Psoas muscle (tissue), 8 donors: ENCODE measurements at regions of chr9 and their contacts with region 1.

Region 1: DNA sequence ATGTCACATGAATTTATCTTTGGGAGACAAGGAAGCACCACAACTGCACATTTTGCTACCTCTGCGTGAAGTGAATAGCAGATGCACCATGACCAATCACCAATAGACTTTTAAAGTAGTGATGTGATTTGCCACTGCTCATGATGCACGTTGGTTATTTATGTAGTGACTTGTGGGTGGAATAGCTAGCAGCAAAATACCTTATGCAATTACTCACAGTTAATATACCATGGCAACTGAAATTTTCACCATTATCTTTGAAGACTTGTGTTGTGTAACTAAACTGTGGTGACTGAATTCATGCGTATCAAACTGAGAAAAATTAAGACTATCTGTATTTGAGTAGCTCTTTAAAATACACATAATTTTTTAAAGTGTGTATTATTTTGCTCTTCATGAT is 46.2 kb upstream of the TUSC1 start:
- DNase-seq: no peak
- ATAC-seq: no peak
- H3K4me3 ChIP-seq: no peak overlapping the region
- H3K27ac ChIP-seq: no peak overlapping the region
- H3K4me1 ChIP-seq: no peaks in the 10 kb centered on the region
- H3K27me3 ChIP-seq: no peaks in the 10 kb centered on the region
- CTCF ChIP-seq: no peak

Region 2: GRCh38 chr9:25557645-25558300 is 166.7 kb before region 1 on chr9:
- intact Hi-C with region 1: loop called in 1 of 2 experiments (anchors 10 kb)
- DNase-seq: no peak
- ATAC-seq: no peak
- H3K4me3 ChIP-seq: no peak overlapping the region
- H3K27ac ChIP-seq: no peak overlapping the region
- H3K4me1 ChIP-seq: no peaks in the 10 kb centered on the region
- H3K27me3 ChIP-seq: no peaks in the 10 kb centered on the region
- CTCF ChIP-seq: no peak

Region 3: DNA sequence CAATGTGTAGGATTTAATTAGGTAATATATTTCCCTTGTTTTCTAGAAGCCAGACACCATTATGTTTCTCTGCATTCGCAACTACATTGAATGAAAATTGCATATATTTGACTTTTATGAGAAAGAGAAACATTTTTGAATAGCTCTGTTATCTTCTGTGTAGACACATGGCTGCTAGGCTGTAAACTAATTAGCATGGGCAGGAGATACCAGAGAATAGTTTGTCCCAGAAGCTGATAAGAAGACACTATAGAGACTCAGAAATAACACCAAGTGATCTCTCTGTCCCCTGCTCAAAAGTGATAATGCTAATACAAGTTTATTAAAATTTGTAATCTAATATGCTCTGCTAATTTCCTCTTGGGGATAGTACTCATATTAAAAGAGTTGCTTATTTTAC is 151.8 kb after region 1 on chr9:
- intact Hi-C with region 1: no loop called
- DNase-seq: no peak
- ATAC-seq: no peak
- H3K4me3 ChIP-seq: no peak overlapping the region
- H3K27ac ChIP-seq: no peak overlapping the region
- H3K4me1 ChIP-seq: no peaks in the 10 kb centered on the region
- H3K27me3 ChIP-seq: no peaks in the 10 kb centered on the region
- CTCF ChIP-seq: no peak